ENCODE measurements at regions of chr1 and their contacts with region 1.

Region 1: GRCh38 chr1:178189814-178190213 is 95.9 kb downstream of the RASAL2 start:
- DNase-seq: peak; percentile 23
- H3K4me3 ChIP-seq: no peak overlapping the region
- H3K27ac ChIP-seq: no peak overlapping the region
- H3K4me1 ChIP-seq: no peaks in the 10 kb centered on the region
- CTCF ChIP-seq: peak; percentile 75

Region 2: GRCh38 chr1:178031856-178032320 is 157.9 kb before region 1 on chr1:
- CTCF ChIA-PET with region 1: no interaction called
- POLR2A ChIA-PET with region 1: no interaction called
- intact Hi-C with region 1: loop called (anchors 5 kb)
- DNase-seq: peak; percentile 49
- H3K4me3 ChIP-seq: no peak overlapping the region
- H3K27ac ChIP-seq: no peak overlapping the region
- H3K4me1 ChIP-seq: no peaks in the 10 kb centered on the region
- CTCF ChIP-seq: peak; percentile 89

Region 3: GRCh38 chr1:178055779-178056471 is 133.9 kb before region 1 on chr1:
- CTCF ChIA-PET with region 1: no interaction called
- POLR2A ChIA-PET with region 1: no interaction called
- intact Hi-C with region 1: loop called (anchors 10 kb)
- DNase-seq: peak; percentile 3
- H3K4me3 ChIP-seq: no peak overlapping the region
- H3K27ac ChIP-seq: no peak overlapping the region
- H3K4me1 ChIP-seq: no peaks in the 10 kb centered on the region
- CTCF ChIP-seq: 0 out of 2 replicates have a peak, but pooled peaks have one; percentile 11

Region 4: DNA sequence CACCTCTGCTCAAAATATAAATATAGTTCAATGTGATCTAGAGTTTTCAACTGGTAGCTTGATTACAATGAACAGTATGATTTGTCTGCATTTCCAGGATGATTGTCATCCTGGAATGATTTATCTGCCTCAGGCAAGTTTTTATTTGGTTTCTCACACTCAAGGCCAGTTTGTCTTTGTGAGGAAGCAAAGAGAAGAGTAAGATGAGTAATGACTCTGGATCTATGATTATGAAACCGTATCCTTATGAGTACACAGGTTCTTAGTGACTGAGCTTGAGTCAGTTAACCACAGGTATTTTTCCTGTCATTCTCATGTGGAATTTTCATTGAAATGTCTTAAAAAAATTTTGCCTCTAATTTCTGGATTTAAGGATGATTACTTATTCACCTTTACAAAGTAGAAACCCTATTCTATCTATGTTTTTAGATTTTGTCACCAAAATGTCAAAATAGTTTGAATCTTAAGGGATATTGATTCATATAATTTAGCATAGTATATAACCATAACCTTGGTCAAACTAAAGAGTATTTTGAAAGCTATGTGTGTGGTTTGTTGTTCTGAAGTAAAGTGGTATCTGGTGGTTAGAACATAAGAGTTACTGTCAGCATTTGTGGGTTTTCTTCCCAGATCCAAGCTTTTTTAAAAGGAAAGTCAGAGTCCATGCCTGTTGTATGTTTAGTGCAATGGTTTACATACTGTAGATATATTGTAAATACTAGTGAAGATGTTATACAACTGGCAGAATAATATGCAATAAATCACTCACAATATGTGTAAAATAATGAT is 49.1 kb after region 1 on chr1:
- CTCF ChIA-PET with region 1: no interaction called
- POLR2A ChIA-PET with region 1: no interaction called
- intact Hi-C with region 1: no loop called
- DNase-seq: no peak
- H3K4me3 ChIP-seq: no peak overlapping the region
- H3K27ac ChIP-seq: no peak overlapping the region
- H3K4me1 ChIP-seq: no peaks in the 10 kb centered on the region
- CTCF ChIP-seq: no peak

Region 5: DNA sequence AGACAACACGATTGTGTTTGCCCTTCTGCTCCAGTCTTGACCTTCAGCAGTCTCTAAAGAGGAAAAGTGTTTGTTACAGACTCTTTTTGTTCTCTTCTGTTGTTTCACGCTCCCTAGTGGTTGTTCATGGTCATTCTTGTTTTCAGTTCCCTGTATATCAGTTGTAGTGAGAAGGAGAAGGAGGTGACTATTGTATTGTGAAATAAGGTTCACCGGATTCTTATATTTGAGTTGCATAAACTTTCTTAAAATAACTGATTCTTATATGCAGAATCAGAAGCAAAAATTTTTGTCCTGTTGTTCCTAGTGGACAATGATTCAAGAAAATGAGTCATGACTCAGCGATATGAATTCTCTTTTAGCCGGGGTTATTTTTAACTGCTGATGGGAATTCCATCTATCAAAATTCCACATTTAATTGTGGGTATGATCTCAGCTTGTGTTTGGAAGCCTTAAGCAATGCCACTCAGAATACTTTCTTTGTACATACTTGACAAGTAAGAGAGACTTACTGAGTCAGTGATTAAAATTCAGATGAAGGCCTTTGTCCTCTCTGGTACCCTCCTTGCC is 154.8 kb after region 1 on chr1:
- CTCF ChIA-PET with region 1: no interaction called
- POLR2A ChIA-PET with region 1: no interaction called
- intact Hi-C with region 1: no loop called
- DNase-seq: peak; percentile 2
- H3K4me3 ChIP-seq: no peak overlapping the region
- H3K27ac ChIP-seq: no peak overlapping the region
- H3K4me1 ChIP-seq: no peaks in the 10 kb centered on the region
- CTCF ChIP-seq: peak; percentile 54

Region 6: DNA sequence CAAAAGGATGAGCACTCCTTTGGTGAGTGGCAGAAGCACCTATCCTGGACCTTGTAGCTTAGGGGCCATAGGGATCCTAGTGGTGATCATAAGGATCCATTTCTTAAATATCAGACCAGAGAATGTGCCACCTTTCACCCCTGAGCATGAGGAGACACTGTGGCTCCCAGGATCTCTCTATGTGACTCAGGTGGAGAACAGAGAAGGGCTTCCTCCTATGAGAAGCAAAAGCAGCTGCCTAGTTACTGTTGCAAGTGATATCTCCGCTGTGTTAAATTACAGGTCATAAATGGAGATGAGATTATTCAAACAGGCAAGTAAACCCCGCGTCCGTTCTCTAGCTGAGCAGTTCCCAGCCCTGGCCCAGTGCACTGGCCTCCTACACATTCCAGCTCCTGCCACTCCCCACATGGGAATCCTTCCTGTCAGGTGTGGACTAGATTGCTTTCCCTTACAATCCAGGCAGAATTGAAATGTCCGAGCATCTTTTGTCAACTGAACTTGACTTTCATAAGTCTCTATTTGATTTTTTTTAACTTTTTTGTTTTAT is 280.7 kb after region 1 on chr1:
- CTCF ChIA-PET with region 1: no interaction called
- POLR2A ChIA-PET with region 1: no interaction called
- intact Hi-C with region 1: no loop called
- DNase-seq: no peak
- H3K4me3 ChIP-seq: no peak overlapping the region
- H3K27ac ChIP-seq: no peak overlapping the region
- H3K4me1 ChIP-seq: no peaks in the 10 kb centered on the region
- CTCF ChIP-seq: no peak